Activated CD8-positive, alpha-beta T cell treated with anti-CD3 and anti-CD28 coated beads, Interleukin-2, amount 10 ng/mL, durations not matched to agents 7 days and 5 days (primary cell): ENCODE measurements at regions of chr18 and their contacts with region 1.

Region 1: DNA sequence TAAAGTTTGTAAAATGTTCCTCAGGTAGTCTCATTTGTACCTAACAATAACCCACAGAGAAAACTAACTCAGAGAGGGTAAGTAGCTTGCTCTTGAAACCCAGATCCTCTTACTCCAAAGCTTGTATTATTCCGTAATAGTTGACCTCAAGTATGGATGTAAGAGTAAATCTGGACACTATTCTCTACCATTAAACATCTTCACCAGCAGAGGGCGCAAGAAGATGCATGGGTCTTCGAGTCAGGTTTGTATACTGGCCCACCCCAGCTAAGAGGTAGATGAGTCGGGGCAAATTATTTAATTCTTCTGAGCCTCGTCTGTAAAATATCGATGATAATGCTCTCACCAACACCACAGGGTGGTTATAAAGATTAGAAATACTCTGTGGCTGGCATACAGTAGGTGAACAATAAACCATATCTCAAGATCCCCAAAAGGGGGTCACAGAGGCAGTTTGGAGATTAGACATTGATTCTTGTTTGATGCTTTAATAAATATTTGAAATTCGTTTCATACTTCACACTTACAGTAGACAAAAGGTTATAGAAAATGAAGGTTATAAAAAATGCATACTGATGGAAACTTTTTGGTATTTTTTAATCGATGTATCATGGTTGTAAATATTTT is 3.5 kb upstream of the CABLES1 start:
- DNase-seq: peak; percentile 82
- ATAC-seq: no peak
- H3K4me3 Mint-ChIP-seq: no peak overlapping the region
- H3K27ac Mint-ChIP-seq: no peak overlapping the region
- H3K4me1 Mint-ChIP-seq: peaks cover 29% of the 10 kb centered on the region
- H3K27me3 Mint-ChIP-seq: peaks cover 13% of the 10 kb centered on the region

Region 2: DNA sequence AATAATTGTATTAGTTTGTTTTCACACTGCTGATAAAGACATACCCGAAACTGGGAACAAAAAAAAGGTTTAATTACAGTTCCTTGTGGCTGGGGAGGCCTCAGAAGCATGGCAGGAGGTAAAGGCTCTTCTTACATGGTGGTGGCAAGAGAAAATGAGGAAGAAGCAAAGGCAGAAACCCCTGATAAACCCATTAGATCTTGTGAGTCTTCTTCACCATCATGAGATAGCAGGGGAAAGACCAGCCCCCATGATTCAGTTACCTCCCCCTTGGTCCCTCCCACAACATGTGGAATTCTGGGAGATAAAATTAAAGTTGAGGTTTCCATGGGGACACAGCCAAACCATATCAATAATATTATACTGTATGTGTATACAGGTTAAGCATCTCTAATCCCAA is 69.8 kb before region 1 on chr18:
- CTCF ChIA-PET with region 1: no interaction called
- POLR2A ChIA-PET with region 1: no interaction called
- DNase-seq: no peak
- ATAC-seq: no peak
- H3K4me3 Mint-ChIP-seq: no peak overlapping the region
- H3K27ac Mint-ChIP-seq: no peak overlapping the region
- H3K4me1 Mint-ChIP-seq: peaks cover 6% of the 10 kb centered on the region
- H3K27me3 Mint-ChIP-seq: peaks cover 13% of the 10 kb centered on the region

Region 3: DNA sequence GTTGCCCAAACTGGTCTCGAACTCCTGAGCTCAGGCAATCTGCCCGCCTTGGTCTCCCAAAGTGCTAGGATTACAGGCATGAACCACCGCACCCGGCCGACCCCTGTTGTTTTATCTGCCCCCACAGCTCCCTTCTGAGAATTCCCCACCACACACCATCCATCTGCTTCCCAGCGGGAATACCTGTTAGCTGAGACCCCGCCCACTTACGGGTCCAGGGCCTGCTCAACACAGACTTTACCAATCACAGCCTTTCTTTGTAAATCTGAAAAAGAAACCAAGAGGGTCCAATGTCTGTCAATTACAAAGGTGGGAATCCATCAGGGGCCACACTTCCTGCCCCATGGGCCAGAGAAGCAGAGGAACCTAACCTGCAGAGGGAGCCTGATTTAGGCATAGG is 10.7 kb before region 1 on chr18:
- CTCF ChIA-PET with region 1: interaction called, 10 read pairs
- POLR2A ChIA-PET with region 1: no interaction called
- DNase-seq: no peak
- ATAC-seq: no peak
- H3K4me3 Mint-ChIP-seq: no peak overlapping the region
- H3K27ac Mint-ChIP-seq: no peak overlapping the region
- H3K4me1 Mint-ChIP-seq: no peaks in the 10 kb centered on the region
- H3K27me3 Mint-ChIP-seq: peaks cover 8% of the 10 kb centered on the region